ENCODE measurements at regions of chr9 and their contacts with region 1.

Region 1: GRCh38 chr9:86275962-86276361 is 6.4 kb downstream of the ISCA1 start:
- DNase-seq: no peak
- H3K4me3 Mint-ChIP-seq: no peak overlapping the region
- H3K27ac Mint-ChIP-seq: no peak overlapping the region
- H3K4me1 Mint-ChIP-seq: peaks cover 20% of the 10 kb centered on the region
- H3K27me3 Mint-ChIP-seq: no peaks in the 10 kb centered on the region

Region 2: GRCh38 chr9:86202338-86202882 is 73.6 kb before region 1 on chr9:
- intact Hi-C with region 1: loop called (anchors 2 kb)
- DNase-seq: no peak
- H3K4me3 Mint-ChIP-seq: no peak overlapping the region
- H3K27ac Mint-ChIP-seq: no peak overlapping the region
- H3K4me1 Mint-ChIP-seq: peaks cover 4% of the 10 kb centered on the region
- H3K27me3 Mint-ChIP-seq: peaks cover 3% of the 10 kb centered on the region